Colonic mucosa (tissue), 4 donors: ENCODE measurements at regions of chr7 and their contacts with region 1.

Region 1: GRCh38 chr7:108525985-108526767 is at the start of gene PNPLA8:
- DNase-seq: peak; percentile 100
- H3K4me3 ChIP-seq: peak within 1 kb of the TSS; percentile 62
- H3K27ac ChIP-seq: peak within 1 kb of the TSS; percentile 96
- H3K4me1 ChIP-seq: no peaks in the 10 kb centered on the region
- H3K27me3 ChIP-seq: no peaks in the 10 kb centered on the region
- CTCF ChIP-seq: no peak
- total RNA-seq, gene PNPLA8: 14.1 to 28.8 TPM

Region 2: DNA sequence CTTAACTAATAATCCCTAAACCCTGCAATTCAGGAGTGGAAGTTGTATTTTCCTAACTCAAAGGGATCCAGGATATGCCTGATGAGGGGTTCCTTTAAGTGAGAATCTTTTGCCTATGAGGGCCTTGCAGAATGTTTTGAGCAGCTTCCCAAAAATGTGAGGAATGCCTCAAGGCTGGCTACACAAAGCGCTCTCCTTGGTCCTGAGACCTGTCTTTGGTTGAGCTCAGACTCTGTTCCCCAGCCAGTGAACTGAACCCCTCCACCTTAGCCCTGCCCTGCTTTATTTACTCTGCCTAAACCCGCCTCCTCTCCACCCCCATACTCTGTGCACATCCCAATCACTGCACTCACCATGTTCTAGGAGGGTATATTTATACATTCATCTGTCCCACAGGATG is 178.6 kb before region 1 on chr7:
- intact Hi-C with region 1: no loop called
- DNase-seq: no peak
- H3K4me3 ChIP-seq: no peak overlapping the region
- H3K27ac ChIP-seq: no peak overlapping the region
- H3K4me1 ChIP-seq: no peaks in the 10 kb centered on the region
- H3K27me3 ChIP-seq: no peaks in the 10 kb centered on the region
- CTCF ChIP-seq: no peak

Region 3: GRCh38 chr7:108569381-108570145 is 43.4 kb after region 1 on chr7 and contains the starts of genes DNAJB9 and THAP5:
- intact Hi-C with region 1: loop called (anchors 5 kb)
- DNase-seq: peak; percentile 99
- H3K4me3 ChIP-seq: peak within 1 kb of the TSS; percentile 89
- H3K27ac ChIP-seq: peak within 1 kb of the TSS; percentile 98
- H3K4me1 ChIP-seq: peaks cover 12% of the 10 kb centered on the region
- H3K27me3 ChIP-seq: no peaks in the 10 kb centered on the region
- CTCF ChIP-seq: no peak
- total RNA-seq, gene DNAJB9: 7.8 to 24.7 TPM
- total RNA-seq, gene THAP5: 15.7 to 18.0 TPM